HCT116 (cell line): ENCODE measurements at regions of chr12 and their contacts with region 1.

Region 1: DNA sequence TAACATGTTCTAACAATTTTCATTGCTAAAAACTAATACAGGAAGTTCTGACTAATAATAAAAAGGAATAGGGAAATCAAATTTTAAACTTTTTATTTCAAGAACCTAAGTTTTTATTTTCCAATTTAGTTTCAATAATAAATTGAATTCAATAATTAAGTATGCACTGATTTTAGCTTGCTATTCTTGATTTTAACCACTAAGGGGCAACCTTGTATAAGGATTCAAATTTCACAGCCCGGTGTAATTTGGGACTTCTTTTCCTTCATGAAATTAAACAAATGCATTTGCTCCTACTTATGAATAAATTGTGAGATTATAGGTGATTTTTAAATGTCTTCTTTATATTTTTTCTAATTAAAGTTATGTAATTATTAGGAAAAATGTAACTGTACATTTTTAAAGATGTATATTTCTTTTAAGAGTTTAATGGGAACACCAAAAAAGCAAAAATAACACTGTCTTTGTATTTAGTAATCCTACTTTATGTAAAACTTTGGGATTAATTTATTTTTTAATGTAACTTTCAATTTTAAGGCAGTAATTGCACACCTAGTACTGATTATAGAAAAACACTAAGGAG is 241.4 kb upstream of the PDZRN4 start:
- DNase-seq: peak; percentile 22
- ATAC-seq: no peak
- H3K4me3 ChIP-seq: no peak overlapping the region
- H3K27ac ChIP-seq: no peak overlapping the region
- H3K4me1 ChIP-seq: no peaks in the 10 kb centered on the region
- H3K27me3 ChIP-seq: no peaks in the 10 kb centered on the region
- CTCF ChIP-seq: peak; percentile 31 to 63 (median 53); a peak in 4 of 6 replicates
- POLR2A ChIP-seq: no peak
- RAD21 ChIP-seq: peak; percentile 71

Region 2: DNA sequence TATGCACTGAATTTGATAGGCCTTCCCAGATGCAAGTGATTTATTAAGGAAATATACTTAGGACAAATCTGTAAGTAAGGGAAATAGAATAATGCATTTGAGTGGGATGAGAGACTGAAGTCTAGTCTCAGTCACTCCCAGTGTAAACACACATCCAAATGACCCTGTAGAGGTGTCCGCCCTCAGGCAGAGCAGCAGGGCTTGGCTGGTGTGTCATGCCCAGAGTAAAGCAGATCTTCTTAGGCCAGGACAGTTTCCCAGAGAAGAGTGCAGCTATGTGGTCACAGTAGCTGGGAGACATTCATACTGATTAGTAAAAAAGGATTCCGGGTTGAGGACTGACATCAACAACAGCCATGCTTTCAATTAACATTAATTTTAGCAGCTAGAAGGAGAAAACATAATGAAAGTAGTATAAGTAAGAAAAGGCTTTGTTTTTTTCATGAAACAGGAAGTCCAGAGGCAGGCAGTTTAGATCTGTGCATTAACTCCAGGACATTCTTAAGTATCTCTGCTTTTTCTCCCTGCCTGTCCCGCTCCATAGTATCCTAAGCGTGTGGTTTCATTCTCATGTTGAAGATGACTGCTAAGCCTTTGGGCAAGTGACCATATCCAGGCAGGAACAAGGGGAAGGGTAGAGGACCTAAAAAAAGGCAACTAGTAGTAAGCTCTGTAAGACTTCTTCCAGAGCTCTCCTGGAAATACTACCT is 218.8 kb before region 1 on chr12:
- CTCF ChIA-PET with region 1: no interaction called
- POLR2A ChIA-PET with region 1: no interaction called
- RAD21 ChIA-PET with region 1: no interaction called
- intact Hi-C with region 1: no loop called
- DNase-seq: no peak
- ATAC-seq: no peak
- H3K4me3 ChIP-seq: no peak overlapping the region
- H3K27ac ChIP-seq: no peak overlapping the region
- H3K4me1 ChIP-seq: no peaks in the 10 kb centered on the region
- H3K27me3 ChIP-seq: no peaks in the 10 kb centered on the region
- CTCF ChIP-seq: no peak
- POLR2A ChIP-seq: no peak
- RAD21 ChIP-seq: no peak

Region 3: DNA sequence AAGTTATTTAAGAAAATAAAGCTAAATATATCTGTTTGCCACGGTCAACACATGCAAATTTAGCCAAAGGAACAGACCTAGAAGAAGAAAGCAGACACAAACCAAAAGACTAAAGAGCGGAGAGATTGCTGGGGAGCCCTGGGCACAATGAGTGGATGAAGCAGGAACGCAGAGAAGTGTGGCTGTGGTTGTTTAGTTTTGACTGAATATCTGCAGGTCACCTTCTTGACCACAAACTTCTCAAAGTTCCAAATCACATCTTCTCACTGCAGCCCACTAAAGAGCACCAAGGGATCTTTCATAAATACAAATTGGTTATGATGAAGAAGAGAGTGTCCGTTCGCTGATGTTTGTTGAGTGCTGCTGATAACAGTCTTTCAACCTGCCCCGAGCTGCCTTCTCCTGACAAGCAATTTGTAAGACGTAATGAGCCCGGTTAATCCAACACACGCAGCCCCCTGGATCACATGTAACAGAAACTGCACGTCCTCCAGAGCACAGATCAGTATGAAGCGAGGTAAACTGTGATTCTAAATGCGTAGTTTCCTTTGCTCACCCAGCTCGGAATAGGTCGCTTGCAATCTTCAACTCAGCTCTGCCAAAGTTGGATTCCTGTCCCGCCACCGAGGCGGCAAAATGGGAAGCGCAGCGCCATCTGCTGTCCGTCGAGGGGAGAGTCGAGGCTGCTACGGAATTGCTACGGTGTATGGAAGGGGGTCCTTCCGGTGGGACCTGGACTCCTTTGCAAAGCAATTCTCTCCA is 1077.2 kb after region 1 on chr12:
- CTCF ChIA-PET with region 1: interaction called, 7 read pairs
- POLR2A ChIA-PET with region 1: no interaction called
- RAD21 ChIA-PET with region 1: no interaction called
- intact Hi-C with region 1: loop called (anchors 2 kb)
- DNase-seq: peak; percentile 44
- ATAC-seq: peak; percentile 97
- H3K4me3 ChIP-seq: peak overlapping the region; percentile 6 to 9; a peak in 1 of 4 replicates
- H3K27ac ChIP-seq: no peak overlapping the region
- H3K4me1 ChIP-seq: peaks cover 0 to 3% of the 10 kb centered on the region in 2 experiments; a peak in 1 of 4 replicates
- H3K27me3 ChIP-seq: no peaks in the 10 kb centered on the region
- CTCF ChIP-seq: peak; percentile 67 to 97 (median 94); a peak in 5 of 6 replicates
- POLR2A ChIP-seq: no peak
- RAD21 ChIP-seq: peak; percentile 88

Region 4: DNA sequence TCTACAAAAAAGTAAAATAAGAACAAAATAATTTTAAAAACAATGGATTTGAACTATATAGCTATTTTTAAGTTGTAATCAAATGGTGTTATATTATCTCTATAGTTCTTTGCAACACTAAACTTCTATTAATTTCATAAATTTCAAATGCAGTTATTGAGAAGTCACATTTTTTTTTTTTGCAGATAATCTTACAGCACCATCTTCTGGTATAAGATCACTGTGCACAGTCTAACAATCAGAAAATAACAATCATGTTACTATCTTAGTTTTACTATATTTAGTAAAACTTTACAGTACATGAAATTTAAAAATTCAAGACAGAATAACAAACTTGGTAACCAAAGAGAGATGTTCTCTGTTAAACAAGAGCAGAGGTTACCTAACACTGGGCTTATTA is 1157.4 kb after region 1 on chr12:
- CTCF ChIA-PET with region 1: no interaction called
- POLR2A ChIA-PET with region 1: no interaction called
- RAD21 ChIA-PET with region 1: no interaction called
- intact Hi-C with region 1: loop called (anchors 10 kb)
- DNase-seq: no peak
- ATAC-seq: no peak
- H3K4me3 ChIP-seq: no peak overlapping the region
- H3K27ac ChIP-seq: no peak overlapping the region
- H3K4me1 ChIP-seq: peaks cover 0 to 7% of the 10 kb centered on the region in 2 experiments; a peak in 2 of 4 replicates
- H3K27me3 ChIP-seq: no peaks in the 10 kb centered on the region
- CTCF ChIP-seq: peak in 2 of 3 experiments; percentile 22 to 42; a peak in 4 of 6 replicates
- POLR2A ChIP-seq: no peak
- RAD21 ChIP-seq: peak; percentile 48